ENCODE measurements at regions of chr5 and their contacts with region 1.

Region 1: GRCh38 chr5:14491015-14491915 is 90.3 kb upstream of the OTULINL start:
- H3K4me3 Mint-ChIP-seq: peak overlapping the region; percentile 4
- H3K27ac Mint-ChIP-seq: peak overlapping the region; percentile 84
- H3K4me1 Mint-ChIP-seq: peaks cover 65% of the 10 kb centered on the region
- H3K27me3 Mint-ChIP-seq: no peaks in the 10 kb centered on the region

Region 2: GRCh38 chr5:14449052-14449661 is 42.1 kb before region 1 on chr5:
- intact Hi-C with region 1: no loop called
- H3K4me3 Mint-ChIP-seq: no peak overlapping the region
- H3K27ac Mint-ChIP-seq: no peak overlapping the region
- H3K4me1 Mint-ChIP-seq: peaks cover 21% of the 10 kb centered on the region
- H3K27me3 Mint-ChIP-seq: no peaks in the 10 kb centered on the region

Region 3: DNA sequence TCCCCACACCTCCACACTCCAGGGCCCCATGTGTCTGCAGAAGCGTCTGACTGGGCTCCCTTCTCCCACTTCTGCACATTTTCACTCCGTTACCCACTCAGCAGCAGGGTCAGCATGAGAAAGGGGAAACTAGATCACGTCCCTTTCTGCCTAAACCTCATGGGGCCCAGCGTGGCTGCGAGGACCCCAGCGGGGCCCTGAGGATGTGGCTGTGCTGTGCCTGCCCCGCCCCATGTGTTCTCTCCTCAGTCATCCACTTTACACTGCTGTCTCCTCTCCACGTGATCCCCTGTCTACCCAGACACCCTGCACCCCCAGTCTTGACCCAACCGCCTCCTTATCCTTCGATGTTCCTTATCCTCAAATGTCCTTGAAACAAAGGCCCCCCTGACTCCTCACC is 30.5 kb after region 1 on chr5:
- intact Hi-C with region 1: no loop called
- H3K4me3 Mint-ChIP-seq: no peak overlapping the region
- H3K27ac Mint-ChIP-seq: no peak overlapping the region
- H3K4me1 Mint-ChIP-seq: peaks cover 24% of the 10 kb centered on the region
- H3K27me3 Mint-ChIP-seq: no peaks in the 10 kb centered on the region

Region 4: DNA sequence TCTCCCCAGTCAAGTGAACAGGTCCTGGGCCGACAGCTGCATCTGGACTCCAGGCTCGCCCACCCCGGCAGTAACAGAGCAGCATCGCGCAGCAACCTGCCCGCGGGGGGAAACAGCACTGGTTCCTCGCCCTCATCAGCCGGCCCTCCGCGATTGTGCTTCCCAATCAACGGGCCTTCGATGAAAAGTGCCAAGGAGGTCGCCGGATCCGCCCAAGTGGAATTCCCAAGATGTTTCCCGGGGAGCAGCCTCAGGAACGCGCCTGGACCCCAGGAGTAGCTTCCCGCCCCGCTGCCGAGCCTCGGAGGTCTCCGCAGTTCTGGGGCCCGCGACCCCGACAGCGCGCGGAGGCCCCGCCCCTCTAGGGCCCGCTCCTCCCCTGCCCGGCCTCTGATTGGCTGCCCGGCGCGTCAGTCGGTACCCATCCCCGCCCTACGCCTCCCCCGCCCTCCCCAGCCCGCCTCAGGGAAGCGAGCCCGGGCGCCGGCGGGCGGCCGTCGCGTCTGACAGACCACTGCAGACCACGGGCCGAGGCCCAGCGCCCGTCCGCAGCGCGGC is 90.1 kb after region 1 on chr5 and contains the start of gene OTULINL:
- intact Hi-C with region 1: loop called (anchors 5 kb)
- H3K4me3 Mint-ChIP-seq: peak within 1 kb of the TSS; percentile 88
- H3K27ac Mint-ChIP-seq: peak within 1 kb of the TSS; percentile 85
- H3K4me1 Mint-ChIP-seq: peaks cover 65% of the 10 kb centered on the region
- H3K27me3 Mint-ChIP-seq: no peaks in the 10 kb centered on the region

Region 5: DNA sequence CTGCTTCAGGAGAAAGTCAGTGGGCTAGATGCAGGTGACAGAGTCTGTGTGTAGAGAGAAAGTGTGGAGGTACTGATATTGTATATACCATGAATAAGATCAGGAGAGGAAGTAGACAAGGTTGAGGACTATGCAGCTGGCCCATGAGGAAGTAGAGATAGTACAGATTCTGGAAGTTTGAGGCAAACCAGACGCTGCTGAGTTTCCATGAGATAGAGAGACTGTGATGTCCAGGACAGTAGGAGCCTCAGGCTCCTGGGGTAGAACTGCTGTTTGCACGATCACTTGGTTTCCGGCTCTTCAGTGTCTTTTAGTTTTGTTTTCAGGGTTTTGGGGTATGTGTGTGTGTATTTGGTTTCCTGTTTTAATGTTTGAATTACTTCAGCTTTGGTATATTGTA is 103.9 kb after region 1 on chr5:
- intact Hi-C with region 1: loop called (anchors 5 kb)
- H3K4me3 Mint-ChIP-seq: peak overlapping the region; percentile 70
- H3K27ac Mint-ChIP-seq: peak overlapping the region; percentile 84
- H3K4me1 Mint-ChIP-seq: peaks cover 89% of the 10 kb centered on the region
- H3K27me3 Mint-ChIP-seq: no peaks in the 10 kb centered on the region